Panc1 (cell line): ENCODE measurements at regions of chr10 and their contacts with region 1.

Region 1: DNA sequence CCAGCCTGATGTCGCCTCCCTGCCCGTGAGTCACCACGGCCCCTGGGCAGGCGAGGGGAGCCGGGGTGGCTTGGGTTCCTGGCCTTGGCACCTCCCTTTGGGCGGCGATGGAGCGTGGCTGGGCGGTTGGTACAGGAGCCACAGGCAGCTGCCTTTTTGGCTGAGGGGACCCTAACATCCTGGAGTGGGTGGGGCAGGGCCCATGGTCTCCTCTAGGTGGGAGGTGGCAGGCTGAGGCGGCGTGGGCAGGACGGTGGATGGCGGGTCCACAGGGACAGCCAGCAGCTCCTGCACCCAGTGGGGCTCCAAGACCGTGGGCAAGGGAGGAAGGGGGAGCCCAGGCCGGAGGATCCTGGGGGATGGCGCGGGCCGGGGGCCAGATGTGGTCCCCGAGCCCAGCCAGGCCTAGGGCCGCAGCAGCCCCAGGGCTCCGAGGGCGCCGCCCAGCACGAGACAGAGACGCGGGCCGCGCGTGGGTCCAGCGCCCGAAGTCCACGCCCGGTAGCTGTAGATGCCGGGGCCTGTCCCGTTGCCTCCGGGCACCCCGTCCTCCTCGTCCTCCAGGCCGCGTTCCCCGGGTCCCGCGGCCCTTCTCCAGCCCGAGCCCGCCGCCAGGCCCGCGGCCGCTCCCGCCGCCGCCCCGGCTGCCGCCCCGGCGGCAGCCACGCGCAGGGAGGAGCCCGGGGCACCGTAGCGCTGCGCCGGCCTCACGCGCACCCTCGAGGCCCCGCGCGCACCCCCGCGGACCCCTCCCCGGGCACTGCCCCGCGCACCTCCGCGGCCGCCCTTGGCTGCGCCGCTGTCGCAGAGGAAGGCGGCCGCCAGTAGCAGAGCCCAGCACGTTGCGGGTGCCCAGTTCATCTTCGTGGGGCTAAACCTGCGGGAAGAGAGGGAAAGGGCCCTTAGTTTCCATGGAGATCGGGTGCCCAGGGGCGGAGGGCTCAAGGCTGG is 1.3 kb downstream of the SPRN start:
- DNase-seq: no peak
- ATAC-seq: peak; percentile 63
- H3K4me3 ChIP-seq: peak overlapping the region; percentile 8 to 26; a peak in 3 of 4 replicates
- H3K27ac ChIP-seq: no peak overlapping the region
- H3K4me1 ChIP-seq: peaks cover 21% of the 10 kb centered on the region
- H3K27me3 ChIP-seq: no peaks in the 10 kb centered on the region
- CTCF ChIP-seq: no peak

Region 2: DNA sequence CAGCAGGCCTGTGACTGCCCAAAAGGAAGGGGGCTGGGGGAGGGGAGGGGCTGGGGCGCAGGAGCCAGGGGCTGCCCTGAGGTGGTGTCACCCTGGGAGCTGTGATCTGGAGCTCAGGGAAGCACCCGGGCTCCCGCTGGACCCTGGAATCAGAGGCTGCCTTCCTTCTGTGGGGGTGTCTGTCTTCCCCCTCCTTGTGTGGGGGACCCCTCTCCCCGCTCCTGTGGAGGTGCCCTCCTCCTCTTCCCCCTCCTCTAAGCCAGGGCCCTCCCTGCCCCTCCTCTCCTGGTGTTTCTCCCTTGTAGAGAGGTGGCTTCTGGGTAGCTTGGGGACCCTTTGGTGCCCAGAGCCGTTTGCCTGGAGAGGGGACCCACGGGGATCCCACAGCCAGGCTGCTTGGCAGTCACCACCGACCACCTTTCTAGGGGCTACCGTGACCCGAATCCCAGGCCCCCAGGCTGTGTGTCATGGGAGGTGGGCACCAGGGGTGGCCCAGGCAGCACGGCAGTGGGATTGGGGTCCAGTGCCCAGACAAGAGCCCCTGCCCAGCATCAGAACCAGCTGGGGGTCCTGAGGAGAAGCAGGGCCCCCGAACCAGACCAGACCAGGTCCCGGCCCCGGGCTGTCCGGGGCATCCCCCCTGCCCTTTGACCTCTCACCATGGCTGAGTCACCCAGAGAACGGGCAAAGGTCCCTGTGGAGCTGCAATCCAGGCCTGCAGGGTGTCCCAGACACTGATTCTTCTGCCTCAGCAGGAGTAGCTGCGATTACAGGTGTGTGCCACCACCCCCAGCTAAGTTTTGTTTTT is 75.2 kb before region 1 on chr10:
- CTCF ChIA-PET with region 1: no interaction called
- POLR2A ChIA-PET with region 1: interaction called, 11 read pairs
- in situ Hi-C with region 1: no loop called
- intact Hi-C with region 1: no loop called
- DNase-seq: no peak
- ATAC-seq: no peak
- H3K4me3 ChIP-seq: no peak overlapping the region
- H3K27ac ChIP-seq: no peak overlapping the region
- H3K4me1 ChIP-seq: peaks cover 11% of the 10 kb centered on the region; the same call in 1 of the 2 replicates
- H3K27me3 ChIP-seq: no peaks in the 10 kb centered on the region
- CTCF ChIP-seq: no peak

Region 3: GRCh38 chr10:133394801-133395221 is 28.3 kb before region 1 on chr10:
- CTCF ChIA-PET with region 1: no interaction called
- POLR2A ChIA-PET with region 1: interaction called, 26 read pairs
- in situ Hi-C with region 1: no loop called
- intact Hi-C with region 1: no loop called
- DNase-seq: no peak
- ATAC-seq: no peak
- H3K4me3 ChIP-seq: peak overlapping the region; percentile 88 to 99
- H3K27ac ChIP-seq: peak overlapping the region; percentile 99
- H3K4me1 ChIP-seq: peaks cover 13% of the 10 kb centered on the region
- H3K27me3 ChIP-seq: no peaks in the 10 kb centered on the region
- CTCF ChIP-seq: no peak

Region 4: GRCh38 chr10:133567609-133568286 is 144.7 kb after region 1 on chr10:
- CTCF ChIA-PET with region 1: no interaction called
- POLR2A ChIA-PET with region 1: no interaction called
- in situ Hi-C with region 1: no loop called
- intact Hi-C with region 1: loop called (anchors 2 kb)
- DNase-seq: no peak
- ATAC-seq: no peak
- H3K4me3 ChIP-seq: no peak overlapping the region
- H3K27ac ChIP-seq: no peak overlapping the region
- H3K4me1 ChIP-seq: no peaks in the 10 kb centered on the region
- H3K27me3 ChIP-seq: no peaks in the 10 kb centered on the region
- CTCF ChIP-seq: no peak